Motor neuron (in vitro differentiated cells): ENCODE measurements at regions of chr22 and their contacts with region 1.

Region 1: DNA sequence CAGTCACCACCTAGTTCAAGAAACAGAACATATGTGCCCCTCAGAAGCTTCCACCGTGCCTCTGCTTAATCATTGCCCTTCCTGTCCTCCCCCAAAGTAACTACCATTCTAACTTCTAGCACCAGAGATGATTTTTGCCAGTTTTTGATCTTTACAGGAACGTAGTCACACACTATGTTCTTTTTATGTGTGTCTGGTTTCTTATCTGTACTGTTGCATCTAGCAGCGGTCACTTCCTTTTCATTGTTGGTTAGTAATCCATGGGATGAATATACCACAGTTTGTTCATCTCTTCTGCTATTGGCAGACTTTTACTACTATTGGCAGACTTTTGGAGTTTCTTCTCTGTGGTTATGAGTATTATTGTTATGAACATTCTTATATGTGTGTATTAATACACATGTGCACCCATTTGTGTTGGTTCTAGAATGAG is 34.6 kb downstream of the SPECC1L start:
- ATAC-seq: no peak
- H3K4me3 ChIP-seq: no peak overlapping the region
- H3K27ac ChIP-seq: no peak overlapping the region
- H3K4me1 ChIP-seq: no peaks in the 10 kb centered on the region

Region 2: GRCh38 chr22:24503137-24503842 is 198.0 kb after region 1 on chr22:
- in situ Hi-C with region 1: loop called in 1 of 9 experiments (anchors 25 kb)
- ATAC-seq: peak in 3 of 8 experiments; percentile 78 to 86 (median 81)
- H3K4me3 ChIP-seq: no peak overlapping the region
- H3K27ac ChIP-seq: no peak overlapping the region
- H3K4me1 ChIP-seq: peaks cover 23 to 37% of the 10 kb centered on the region in 2 donors

Region 3: DNA sequence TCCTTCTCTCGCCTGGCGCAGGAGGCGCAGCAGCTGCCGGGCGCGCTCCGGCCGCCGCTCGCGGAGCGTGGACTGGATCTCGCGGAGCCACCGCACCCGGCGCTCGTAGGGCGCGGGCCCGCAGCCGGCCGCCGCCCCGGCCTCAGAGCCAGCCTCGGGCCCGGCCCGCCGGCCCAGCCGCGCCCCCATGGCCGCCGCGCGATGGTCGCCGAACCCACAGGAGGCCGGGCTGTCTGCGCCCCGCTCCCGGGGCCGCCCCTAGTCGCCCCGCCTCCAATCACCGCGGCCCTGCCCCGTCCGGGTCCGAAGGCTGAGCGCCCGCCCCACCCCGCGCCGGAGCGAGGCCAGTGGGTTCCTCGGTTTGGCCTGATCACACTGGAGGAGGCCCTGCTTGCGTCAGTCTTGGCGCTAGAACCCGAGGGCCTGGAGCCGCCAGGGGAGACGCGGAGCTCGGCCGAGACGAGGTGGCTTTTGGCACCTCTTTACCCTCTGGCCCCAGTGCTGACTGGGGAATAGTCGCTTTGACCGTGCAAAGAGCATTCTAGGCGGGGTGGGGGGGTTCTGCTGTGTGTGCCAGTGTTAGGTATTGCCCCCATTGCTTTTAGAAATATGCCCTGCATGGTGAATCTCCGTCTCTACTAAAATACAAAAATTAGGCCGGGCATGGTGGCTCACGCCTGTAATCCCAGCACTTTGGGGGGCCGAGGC is 287.7 kb after region 1 on chr22 and contains the start of gene LRRC75B:
- in situ Hi-C with region 1: no loop called
- ATAC-seq: peak; percentile 86 to 96 (median 91)
- H3K4me3 ChIP-seq: peak within 1 kb of the TSS; percentile 38 to 51 (median 50)
- H3K27ac ChIP-seq: peak within 1 kb of the TSS; percentile 26 to 75
- H3K4me1 ChIP-seq: peaks cover 17 to 21% of the 10 kb centered on the region in 2 donors
- total RNA-seq, gene LRRC75B: 2.0 to 14.4 (median 10.4) TPM